H1 (cell line): ENCODE measurements at regions of chr2 and their contacts with region 1.

Region 1: DNA sequence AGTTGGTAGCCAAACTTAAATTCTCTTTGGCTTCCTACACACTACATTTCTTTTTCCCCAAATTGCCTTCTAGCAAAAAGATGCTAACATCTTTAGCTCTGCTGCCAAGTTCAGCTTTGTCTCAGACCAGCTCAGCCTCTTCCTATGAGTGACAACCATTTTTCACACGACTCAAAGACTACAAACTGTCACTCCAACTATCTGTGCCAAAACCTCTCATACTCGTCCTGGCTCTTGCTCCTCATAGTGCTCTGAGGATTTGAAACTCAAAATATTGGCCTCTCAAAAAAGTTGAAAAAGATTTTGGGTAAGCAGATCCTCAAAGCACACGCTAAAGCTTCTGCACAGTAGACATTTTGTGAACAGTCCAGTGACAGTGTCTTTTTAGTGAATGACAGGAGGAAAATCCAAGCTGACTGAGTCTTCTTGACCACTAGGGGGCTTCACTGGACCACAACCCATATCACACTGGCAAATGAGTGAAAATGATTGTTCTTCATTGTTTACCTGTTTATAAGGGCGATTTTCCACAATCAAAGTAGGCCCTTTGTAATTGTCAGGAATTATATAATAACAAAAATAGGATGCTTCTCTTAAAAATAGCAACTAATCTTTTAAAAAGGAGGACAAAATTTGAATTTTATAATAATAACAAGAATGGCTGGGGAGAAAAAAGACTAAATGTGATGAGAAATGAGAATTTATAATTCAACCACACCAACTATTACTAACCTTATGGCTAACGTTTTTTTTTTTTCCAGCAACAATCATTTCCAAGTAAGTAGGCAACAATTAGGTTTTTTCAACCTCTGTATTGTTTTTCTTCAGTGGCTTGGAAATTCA is 85.5 kb upstream of the PGAP1 start:
- DNase-seq: no peak
- H3K4me3 ChIP-seq: no peak overlapping the region
- H3K27ac ChIP-seq: no peak overlapping the region
- H3K4me1 ChIP-seq: no peaks in the 10 kb centered on the region; a peak in 2 of 7 replicates
- H3K27me3 ChIP-seq: no peaks in the 10 kb centered on the region
- CTCF ChIP-seq: peak; percentile 35 to 92 (median 60)
- EP300 ChIP-seq: no peak
- POLR2A ChIP-seq: no peak
- RAD21 ChIP-seq: peak; percentile 67 to 69

Region 2: DNA sequence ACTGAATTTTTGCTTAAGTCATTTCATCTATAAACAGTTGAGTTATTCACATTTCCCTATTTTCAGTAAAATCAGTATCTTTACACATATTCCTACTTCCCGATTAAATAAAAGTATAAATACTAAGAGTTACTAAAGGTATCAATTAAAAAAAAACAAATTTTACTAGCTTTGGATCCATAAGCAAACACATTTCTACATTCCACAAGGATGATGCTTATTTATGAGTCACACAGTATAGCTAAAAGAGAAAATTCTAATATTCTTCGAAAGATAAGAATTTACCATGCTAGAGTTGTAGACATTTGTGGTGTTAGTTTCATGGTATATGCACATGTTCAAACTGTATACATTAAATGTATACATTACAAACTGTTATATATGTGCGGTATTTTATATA is 109.2 kb before region 1 on chr2:
- CTCF ChIA-PET with region 1: interaction called, 11 read pairs
- POLR2A ChIA-PET with region 1: no interaction called
- DNase-seq: no peak
- H3K4me3 ChIP-seq: no peak overlapping the region
- H3K27ac ChIP-seq: no peak overlapping the region
- H3K4me1 ChIP-seq: no peaks in the 10 kb centered on the region
- H3K27me3 ChIP-seq: no peaks in the 10 kb centered on the region
- CTCF ChIP-seq: no peak
- EP300 ChIP-seq: no peak
- POLR2A ChIP-seq: no peak
- RAD21 ChIP-seq: no peak

Region 3: GRCh38 chr2:196992081-196992865 is 19.7 kb before region 1 on chr2:
- CTCF ChIA-PET with region 1: interaction called, 15 read pairs
- POLR2A ChIA-PET with region 1: no interaction called
- DNase-seq: no peak
- H3K4me3 ChIP-seq: no peak overlapping the region
- H3K27ac ChIP-seq: no peak overlapping the region
- H3K4me1 ChIP-seq: peaks cover 0 to 6% (median 2%) of the 10 kb centered on the region in 4 experiments; a peak in 4 of 7 replicates
- H3K27me3 ChIP-seq: no peaks in the 10 kb centered on the region
- CTCF ChIP-seq: no peak
- EP300 ChIP-seq: no peak
- POLR2A ChIP-seq: no peak
- RAD21 ChIP-seq: no peak

Region 4: DNA sequence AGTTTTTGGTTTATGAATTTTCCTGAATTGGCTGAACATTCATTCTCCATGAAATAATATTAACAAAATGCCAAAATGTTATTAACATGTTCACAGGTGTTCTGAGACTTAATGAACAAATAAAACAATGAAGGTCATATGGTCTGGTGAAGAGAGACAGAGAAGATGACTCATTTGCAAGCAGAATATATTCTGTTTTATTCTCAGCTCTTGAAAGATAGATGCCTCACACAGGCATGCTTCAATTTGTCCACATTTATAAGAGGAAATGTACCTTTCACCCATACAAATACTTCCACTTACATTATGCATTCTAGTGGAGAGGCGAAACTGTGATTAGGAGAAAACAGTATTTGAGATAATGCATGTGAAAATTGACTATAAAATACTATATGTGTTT is 10.1 kb before region 1 on chr2:
- CTCF ChIA-PET with region 1: interaction called, 15 read pairs
- POLR2A ChIA-PET with region 1: no interaction called
- DNase-seq: no peak
- H3K4me3 ChIP-seq: no peak overlapping the region
- H3K27ac ChIP-seq: no peak overlapping the region
- H3K4me1 ChIP-seq: no peaks in the 10 kb centered on the region
- H3K27me3 ChIP-seq: no peaks in the 10 kb centered on the region
- CTCF ChIP-seq: no peak
- EP300 ChIP-seq: no peak
- POLR2A ChIP-seq: no peak
- RAD21 ChIP-seq: no peak

Region 5: DNA sequence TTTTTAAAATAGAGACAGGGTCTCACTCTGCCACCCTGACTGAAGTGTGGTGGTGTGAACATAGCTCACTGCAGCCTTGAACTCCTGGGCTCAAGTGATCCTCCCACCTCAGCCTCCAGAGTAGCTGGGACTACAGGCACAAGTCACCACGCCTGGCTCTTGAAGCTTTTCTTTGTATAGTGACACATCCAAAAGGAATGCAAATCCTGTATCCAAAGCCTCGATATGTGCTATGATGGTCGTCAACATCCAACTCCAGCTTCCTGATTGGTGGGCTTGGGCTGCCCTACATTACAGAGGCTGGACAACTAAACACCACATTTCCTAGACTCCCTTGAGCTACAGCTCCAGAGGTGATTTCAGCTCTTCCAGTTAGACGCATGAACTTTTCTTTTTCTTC is 16.2 kb after region 1 on chr2:
- CTCF ChIA-PET with region 1: interaction called, 41 read pairs
- POLR2A ChIA-PET with region 1: no interaction called
- DNase-seq: no peak
- H3K4me3 ChIP-seq: no peak overlapping the region
- H3K27ac ChIP-seq: no peak overlapping the region
- H3K4me1 ChIP-seq: no peaks in the 10 kb centered on the region; a peak in 2 of 7 replicates
- H3K27me3 ChIP-seq: no peaks in the 10 kb centered on the region
- CTCF ChIP-seq: no peak
- EP300 ChIP-seq: no peak
- POLR2A ChIP-seq: no peak
- RAD21 ChIP-seq: no peak

Region 6: DNA sequence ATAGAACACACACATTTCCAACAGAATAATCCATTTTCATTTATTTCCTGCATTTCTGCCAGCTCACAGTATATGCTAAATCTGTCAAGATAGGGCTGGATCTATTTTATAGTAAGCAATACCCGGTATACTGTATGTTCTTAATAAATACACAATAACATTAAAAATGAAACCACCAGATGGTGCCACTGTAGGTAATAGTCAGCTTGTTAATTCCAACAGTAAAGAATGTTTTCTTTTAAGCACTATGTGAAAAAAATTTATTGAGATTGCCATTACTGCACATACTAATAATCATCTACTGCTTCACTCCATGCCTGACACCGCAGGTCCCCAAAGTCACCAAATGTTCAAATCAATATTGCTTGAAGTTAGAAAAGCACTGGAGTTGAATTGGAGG is 45.9 kb after region 1 on chr2:
- CTCF ChIA-PET with region 1: no interaction called
- POLR2A ChIA-PET with region 1: no interaction called
- DNase-seq: no peak
- H3K4me3 ChIP-seq: no peak overlapping the region
- H3K27ac ChIP-seq: no peak overlapping the region
- H3K4me1 ChIP-seq: no peaks in the 10 kb centered on the region
- H3K27me3 ChIP-seq: no peaks in the 10 kb centered on the region
- CTCF ChIP-seq: no peak
- EP300 ChIP-seq: no peak
- POLR2A ChIP-seq: no peak
- RAD21 ChIP-seq: no peak